Endothelial cell of umbilical vein (primary cell): ENCODE measurements at regions of chr11 and their contacts with region 1.

Region 1: DNA sequence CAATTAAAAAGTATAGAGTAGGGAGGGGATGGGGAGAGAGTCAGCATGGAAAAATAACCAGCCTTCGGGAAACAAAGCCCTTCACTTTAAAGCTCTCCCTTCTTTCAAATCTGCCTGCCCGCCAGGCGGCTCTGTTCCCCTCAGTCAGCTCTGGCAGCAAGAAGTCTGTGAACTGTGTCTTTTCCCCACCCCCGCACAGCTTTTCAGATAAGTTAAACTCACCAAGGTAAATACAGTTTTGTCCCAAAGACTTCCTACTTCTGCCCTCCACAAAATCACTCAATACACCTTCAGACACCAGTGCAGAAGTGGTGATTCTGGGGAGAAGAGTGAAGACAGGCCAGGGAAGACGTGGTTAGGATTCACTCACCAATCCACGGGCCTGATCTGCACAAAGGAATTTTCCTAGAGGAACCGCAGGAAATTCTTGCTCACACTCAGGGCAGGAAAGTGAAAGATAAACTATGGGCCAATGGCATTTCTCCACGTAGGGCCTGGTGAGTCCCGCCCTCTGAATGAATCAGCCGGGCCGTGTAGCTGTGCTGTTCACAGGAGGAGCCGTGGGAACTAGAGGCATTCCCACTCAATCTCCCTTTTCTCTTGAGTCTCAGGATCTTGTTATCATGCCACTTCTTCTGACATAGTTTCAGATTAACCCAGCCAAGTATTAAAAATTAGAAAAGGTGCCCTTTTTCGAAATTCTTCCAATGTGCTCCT is at the start of gene TRIM5:
- DNase-seq: peak; percentile 99
- H3K4me3 ChIP-seq: peak within 1 kb of the TSS; percentile 38 to 94 (median 62)
- H3K27ac ChIP-seq: peak within 1 kb of the TSS; percentile 98
- H3K4me1 ChIP-seq: peaks cover 17% of the 10 kb centered on the region
- H3K27me3 ChIP-seq: no peaks in the 10 kb centered on the region
- CTCF ChIP-seq: peak; percentile 57 to 67
- POLR2A ChIP-seq: peak; percentile 97
- total RNA-seq, gene TRIM5: 54.5 and 61.4 TPM in 2 replicates

Region 2: GRCh38 chr11:5004424-5005274 is 680.2 kb before region 1 on chr11:
- CTCF ChIA-PET with region 1: no interaction called
- POLR2A ChIA-PET with region 1: no interaction called
- dilution Hi-C with region 1: no loop called
- intact Hi-C with region 1: no loop called
- DNase-seq: peak; percentile 55
- H3K4me3 ChIP-seq: no peak overlapping the region
- H3K27ac ChIP-seq: no peak overlapping the region
- H3K4me1 ChIP-seq: no peaks in the 10 kb centered on the region
- H3K27me3 ChIP-seq: no peaks in the 10 kb centered on the region
- CTCF ChIP-seq: peak; percentile 27 to 47
- POLR2A ChIP-seq: no peak

Region 3: DNA sequence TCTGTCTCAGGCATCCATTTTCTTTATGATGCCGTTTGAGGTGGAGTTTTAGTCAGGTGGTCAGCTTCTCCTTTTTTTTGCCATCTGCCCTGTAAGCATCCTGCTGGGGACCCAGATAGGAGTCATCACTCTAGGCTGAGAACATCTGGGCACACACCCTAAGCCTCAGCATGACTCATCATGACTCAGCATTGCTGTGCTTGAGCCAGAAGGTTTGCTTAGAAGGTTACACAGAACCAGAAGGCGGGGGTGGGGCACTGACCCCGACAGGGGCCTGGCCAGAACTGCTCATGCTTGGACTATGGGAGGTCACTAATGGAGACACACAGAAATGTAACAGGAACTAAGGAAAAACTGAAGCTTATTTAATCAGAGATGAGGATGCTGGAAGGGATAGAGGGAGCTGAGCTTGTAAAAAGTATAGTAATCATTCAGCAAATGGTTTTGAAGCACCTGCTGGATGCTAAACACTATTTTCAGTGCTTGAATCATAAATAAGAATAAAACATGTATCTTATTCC is 404.2 kb before region 1 on chr11:
- CTCF ChIA-PET with region 1: no interaction called
- POLR2A ChIA-PET with region 1: no interaction called
- dilution Hi-C with region 1: no loop called
- intact Hi-C with region 1: no loop called
- DNase-seq: peak; percentile 96
- H3K4me3 ChIP-seq: no peak overlapping the region
- H3K27ac ChIP-seq: peak overlapping the region; percentile 5
- H3K4me1 ChIP-seq: peaks cover 11% of the 10 kb centered on the region
- H3K27me3 ChIP-seq: no peaks in the 10 kb centered on the region
- CTCF ChIP-seq: no peak
- POLR2A ChIP-seq: no peak

Region 4: GRCh38 chr11:5600374-5600851 is 84.4 kb before region 1 on chr11:
- CTCF ChIA-PET with region 1: interaction called, 15 read pairs
- POLR2A ChIA-PET with region 1: no interaction called
- dilution Hi-C with region 1: no loop called
- intact Hi-C with region 1: loop called (anchors 2 kb)
- DNase-seq: peak; percentile 91
- H3K4me3 ChIP-seq: no peak overlapping the region
- H3K27ac ChIP-seq: peak overlapping the region; percentile 32
- H3K4me1 ChIP-seq: peaks cover 9% of the 10 kb centered on the region
- H3K27me3 ChIP-seq: no peaks in the 10 kb centered on the region
- CTCF ChIP-seq: peak; percentile 79 to 94
- POLR2A ChIP-seq: no peak

Region 5: DNA sequence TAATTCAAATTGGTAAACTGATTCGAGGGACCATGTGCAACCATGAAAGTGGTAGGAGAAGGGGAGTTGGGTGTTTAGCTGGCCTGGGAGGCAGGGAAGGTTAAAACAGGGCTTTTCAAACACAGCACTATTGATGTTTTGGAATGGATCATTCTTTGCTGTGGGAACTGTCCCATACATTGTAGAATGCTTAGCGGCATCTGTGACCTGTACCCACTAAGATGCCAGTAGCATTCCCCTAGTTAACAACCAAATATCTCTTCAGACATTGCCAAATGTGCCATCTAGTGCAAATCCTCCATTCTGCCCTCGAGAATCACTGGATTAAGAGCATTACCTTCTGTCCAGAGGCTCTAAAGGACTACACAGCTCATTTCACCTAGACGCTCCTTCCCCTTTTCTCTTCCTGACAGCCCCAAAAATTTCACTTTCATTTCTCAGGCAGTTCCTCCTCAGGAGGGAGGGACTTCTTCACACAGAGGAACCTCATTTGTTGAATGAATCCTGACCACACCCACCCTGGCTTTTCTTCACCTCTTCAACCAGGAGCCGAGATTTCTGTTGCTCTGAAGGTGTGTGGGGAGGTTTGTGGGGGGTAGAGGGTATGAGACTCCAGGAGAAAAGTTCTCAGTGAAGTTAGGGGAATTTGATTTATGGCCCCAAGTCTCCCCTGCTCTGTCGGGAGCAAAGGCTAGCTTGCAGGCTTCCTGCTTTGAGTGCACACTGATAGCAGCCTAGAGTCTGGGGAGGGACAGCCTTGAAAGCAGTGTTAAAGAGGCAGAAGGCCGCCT is 60.1 kb before region 1 on chr11 and contains the start of gene TRIM34:
- CTCF ChIA-PET with region 1: interaction called, 3 read pairs
- POLR2A ChIA-PET with region 1: interaction called, 6 read pairs
- dilution Hi-C with region 1: no loop called
- intact Hi-C with region 1: loop called (anchors 1 kb)
- DNase-seq: peak; percentile 95
- H3K4me3 ChIP-seq: peak within 1 kb of the TSS; percentile 40 to 90 (median 67)
- H3K27ac ChIP-seq: peak within 1 kb of the TSS; percentile 76
- H3K4me1 ChIP-seq: peaks cover 22% of the 10 kb centered on the region
- H3K27me3 ChIP-seq: no peaks in the 10 kb centered on the region
- CTCF ChIP-seq: no peak
- POLR2A ChIP-seq: peak; percentile 62
- total RNA-seq, gene TRIM34: 5.2 and 6.7 TPM in 2 replicates

Region 6: GRCh38 chr11:5700421-5701054 is 15.7 kb after region 1 on chr11:
- CTCF ChIA-PET with region 1: interaction called, 10 read pairs
- POLR2A ChIA-PET with region 1: no interaction called
- dilution Hi-C with region 1: no loop called
- intact Hi-C with region 1: no loop called
- DNase-seq: no peak
- H3K4me3 ChIP-seq: no peak overlapping the region
- H3K27ac ChIP-seq: no peak overlapping the region
- H3K4me1 ChIP-seq: no peaks in the 10 kb centered on the region
- H3K27me3 ChIP-seq: no peaks in the 10 kb centered on the region
- CTCF ChIP-seq: no peak
- POLR2A ChIP-seq: no peak

Region 7: DNA sequence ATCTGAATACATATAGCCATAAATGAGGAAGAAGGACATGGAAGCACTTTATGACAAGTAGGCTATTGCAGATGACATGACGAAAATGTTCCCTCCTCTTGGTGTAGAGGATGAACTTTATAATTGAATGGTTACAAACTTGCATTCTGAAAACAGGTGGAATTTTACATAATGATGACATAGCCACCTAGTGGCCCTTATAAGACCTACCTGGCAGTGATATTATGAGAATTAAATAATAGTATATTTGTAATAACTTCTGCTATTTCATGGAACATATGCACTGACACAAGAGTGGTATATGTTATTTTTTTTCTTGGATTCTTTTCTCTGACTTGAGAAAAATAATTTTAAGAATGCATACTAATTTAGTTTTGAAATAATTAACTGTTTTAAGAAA is 27.7 kb after region 1 on chr11:
- CTCF ChIA-PET with region 1: interaction called, 8 read pairs
- POLR2A ChIA-PET with region 1: no interaction called
- dilution Hi-C with region 1: no loop called
- intact Hi-C with region 1: loop called (anchors 1 kb)
- DNase-seq: peak; percentile 28
- H3K4me3 ChIP-seq: no peak overlapping the region
- H3K27ac ChIP-seq: no peak overlapping the region
- H3K4me1 ChIP-seq: no peaks in the 10 kb centered on the region
- H3K27me3 ChIP-seq: no peaks in the 10 kb centered on the region
- CTCF ChIP-seq: peak; percentile 23 to 27
- POLR2A ChIP-seq: no peak